Activated CD4-positive, alpha-beta T cell treated with anti-CD3 and anti-CD28 coated beads for 36 hours (primary cell): ENCODE measurements at regions of chr12 and their contacts with region 1.

Region 1: DNA sequence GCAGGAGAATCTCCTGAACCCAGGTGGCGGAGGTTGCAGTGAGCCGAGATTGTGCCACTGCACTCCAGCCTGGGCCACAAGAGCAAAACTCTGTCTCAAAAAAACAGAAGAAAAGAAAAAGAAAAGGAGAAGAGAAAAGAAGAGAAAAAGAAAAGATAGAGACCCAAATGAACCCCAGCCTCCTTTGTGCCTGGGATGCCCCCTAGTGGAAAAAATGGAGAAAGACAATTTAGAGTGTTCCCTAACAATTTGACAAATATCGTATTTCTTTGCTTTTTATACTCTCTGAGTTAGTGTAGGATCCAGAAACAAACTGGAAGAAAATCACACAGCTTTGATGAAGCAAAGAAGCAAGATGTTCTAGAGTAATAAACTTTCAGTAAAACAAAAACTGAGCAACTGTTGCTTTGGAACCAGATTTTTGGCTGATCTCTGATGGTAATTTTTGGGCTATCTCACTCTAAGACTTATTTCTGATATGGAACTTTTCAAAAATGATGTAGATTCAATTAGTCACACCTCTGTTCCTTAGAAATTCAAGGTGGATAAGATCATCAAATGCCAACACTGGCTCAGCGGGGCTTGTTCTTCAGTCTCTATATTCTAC is 18.6 kb upstream of the PRKAB1 start:
- DNase-seq: no peak
- ATAC-seq: no peak
- H3K4me3 Mint-ChIP-seq: no peak overlapping the region
- H3K27ac Mint-ChIP-seq: no peak overlapping the region
- H3K4me1 Mint-ChIP-seq: no peaks in the 10 kb centered on the region
- H3K27me3 Mint-ChIP-seq: peaks cover 2% of the 10 kb centered on the region

Region 2: GRCh38 chr12:119556854-119557253 is 92.5 kb before region 1 on chr12:
- CTCF ChIA-PET with region 1: interaction called, 4 read pairs
- POLR2A ChIA-PET with region 1: no interaction called
- intact Hi-C with region 1: loop called in 1 of 2 experiments (anchors 5 kb)
- DNase-seq: no peak
- ATAC-seq: no peak
- H3K4me3 Mint-ChIP-seq: no peak overlapping the region
- H3K27ac Mint-ChIP-seq: no peak overlapping the region
- H3K4me1 Mint-ChIP-seq: no peaks in the 10 kb centered on the region
- H3K27me3 Mint-ChIP-seq: peaks cover 26% of the 10 kb centered on the region

Region 3: GRCh38 chr12:119990390-119990874 is 341.1 kb after region 1 on chr12:
- CTCF ChIA-PET with region 1: no interaction called
- POLR2A ChIA-PET with region 1: no interaction called
- intact Hi-C with region 1: no loop called
- DNase-seq: peak; percentile 55
- ATAC-seq: no peak
- H3K4me3 Mint-ChIP-seq: peak overlapping the region; percentile 90
- H3K27ac Mint-ChIP-seq: peak overlapping the region; percentile 90
- H3K4me1 Mint-ChIP-seq: peaks cover 54% of the 10 kb centered on the region
- H3K27me3 Mint-ChIP-seq: no peaks in the 10 kb centered on the region